GM13976 (cell line): ENCODE measurements at regions of chr11 and their contacts with region 1.

Region 1: DNA sequence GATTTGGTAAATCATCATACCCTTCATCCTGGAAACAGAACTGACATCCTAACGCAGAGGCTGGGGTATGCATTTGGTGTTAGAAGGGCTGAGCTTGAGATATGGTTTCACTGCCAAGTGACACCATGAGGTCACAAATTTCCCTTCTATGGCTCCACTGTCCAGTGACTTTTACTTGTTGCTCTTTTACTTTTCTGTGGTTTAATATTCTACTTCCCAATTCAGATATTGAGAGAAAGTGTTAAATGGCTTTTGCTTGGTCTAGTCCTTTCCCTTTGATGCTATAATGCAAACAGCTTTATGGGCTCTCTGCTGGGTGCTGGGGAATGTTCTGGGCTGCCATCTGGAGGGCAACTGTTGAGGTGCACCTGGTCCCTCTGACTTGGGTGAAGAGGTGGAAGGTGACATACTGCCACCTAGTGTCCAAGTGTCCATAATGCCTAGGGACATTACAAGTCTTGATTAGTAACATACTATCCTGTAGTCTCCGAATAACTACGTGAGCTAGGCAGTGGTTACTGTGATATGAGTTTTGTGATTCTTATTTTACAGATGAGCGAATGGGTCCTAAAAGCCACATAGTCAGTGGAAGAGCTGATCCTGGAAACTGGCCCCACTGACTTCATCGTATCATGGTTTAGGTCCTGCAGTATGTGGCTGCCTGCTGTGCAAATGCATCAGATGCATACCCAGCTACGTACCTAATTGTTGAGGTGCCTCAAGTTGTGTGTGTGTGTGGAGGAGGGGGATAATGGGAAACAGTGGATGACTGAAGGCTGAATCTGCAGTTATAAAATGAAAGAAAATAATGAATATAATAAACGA is 149.1 kb upstream of the RAG2 start:
- DNase-seq: peak; percentile 66
- CTCF ChIP-seq: peak; percentile 98

Region 2: DNA sequence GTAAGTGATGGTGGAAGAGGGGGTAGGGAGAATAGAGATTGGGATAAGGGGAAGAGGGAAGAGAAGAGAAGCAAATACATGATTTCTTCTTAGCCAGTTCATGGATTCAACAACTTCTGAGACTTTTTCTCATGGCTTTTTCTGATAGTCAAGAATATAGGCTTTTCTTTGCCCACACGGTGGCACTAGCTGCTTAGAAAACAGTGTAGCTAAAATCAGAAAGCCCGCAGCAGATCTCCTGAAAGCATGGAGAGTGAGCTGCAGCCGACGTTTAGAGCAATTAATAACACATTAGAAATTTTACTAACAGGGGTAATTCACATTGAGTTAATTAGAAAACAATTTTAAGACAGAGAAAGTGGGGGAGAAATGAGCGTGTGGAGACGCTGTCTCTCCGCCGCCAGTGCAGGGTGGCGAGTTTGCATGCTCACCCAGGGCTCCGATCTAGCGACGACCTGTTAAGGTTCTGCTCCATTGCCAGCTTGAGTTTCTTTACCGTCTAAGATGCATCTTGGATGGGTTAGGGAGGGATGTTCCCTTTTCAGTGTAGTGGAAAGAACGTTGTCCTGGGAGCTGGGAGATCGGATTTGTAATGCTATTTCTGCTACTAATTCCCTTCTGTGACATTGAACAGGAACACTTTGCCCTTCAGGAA is 182.6 kb before region 1 on chr11:
- in situ Hi-C with region 1: loop called (anchors 25 kb)
- DNase-seq: peak; percentile 45
- CTCF ChIP-seq: peak; percentile 44

Region 3: DNA sequence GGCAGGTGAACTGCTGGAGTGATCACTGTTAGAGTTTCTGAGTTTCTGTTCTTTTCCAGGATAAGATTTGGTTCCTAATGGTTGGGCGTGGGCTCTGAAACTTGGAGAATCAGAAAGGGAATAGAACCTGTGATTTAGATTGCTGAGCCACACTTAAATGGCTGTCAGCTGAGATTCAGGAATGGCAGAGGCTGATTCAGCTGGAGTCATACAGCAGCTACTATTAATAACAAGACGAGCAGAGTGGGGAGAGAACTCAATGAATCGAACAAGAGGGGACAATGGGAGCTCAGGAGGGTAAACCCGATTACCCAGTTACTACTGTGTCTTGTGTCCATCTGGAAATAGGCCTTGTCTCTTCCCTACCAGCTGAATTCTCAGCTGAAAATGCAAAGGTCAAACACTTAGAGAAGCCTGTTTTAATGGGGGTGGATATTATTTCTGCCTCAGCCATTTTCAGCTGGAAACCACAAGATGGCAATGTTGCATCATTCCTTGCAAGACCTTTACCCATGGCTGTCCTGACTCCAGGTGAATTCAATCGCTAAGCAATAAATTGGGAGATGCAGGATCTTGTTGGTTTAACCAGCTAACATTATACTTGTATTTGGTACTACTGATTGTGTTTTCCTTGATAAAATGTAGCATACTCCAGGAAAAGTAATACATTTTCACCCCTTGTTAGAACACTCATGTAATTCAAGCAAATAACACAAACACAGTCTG is 44.6 kb before region 1 on chr11:
- in situ Hi-C with region 1: loop called (anchors 5 kb)
- DNase-seq: peak; percentile 62
- CTCF ChIP-seq: peak; percentile 67

Region 4: DNA sequence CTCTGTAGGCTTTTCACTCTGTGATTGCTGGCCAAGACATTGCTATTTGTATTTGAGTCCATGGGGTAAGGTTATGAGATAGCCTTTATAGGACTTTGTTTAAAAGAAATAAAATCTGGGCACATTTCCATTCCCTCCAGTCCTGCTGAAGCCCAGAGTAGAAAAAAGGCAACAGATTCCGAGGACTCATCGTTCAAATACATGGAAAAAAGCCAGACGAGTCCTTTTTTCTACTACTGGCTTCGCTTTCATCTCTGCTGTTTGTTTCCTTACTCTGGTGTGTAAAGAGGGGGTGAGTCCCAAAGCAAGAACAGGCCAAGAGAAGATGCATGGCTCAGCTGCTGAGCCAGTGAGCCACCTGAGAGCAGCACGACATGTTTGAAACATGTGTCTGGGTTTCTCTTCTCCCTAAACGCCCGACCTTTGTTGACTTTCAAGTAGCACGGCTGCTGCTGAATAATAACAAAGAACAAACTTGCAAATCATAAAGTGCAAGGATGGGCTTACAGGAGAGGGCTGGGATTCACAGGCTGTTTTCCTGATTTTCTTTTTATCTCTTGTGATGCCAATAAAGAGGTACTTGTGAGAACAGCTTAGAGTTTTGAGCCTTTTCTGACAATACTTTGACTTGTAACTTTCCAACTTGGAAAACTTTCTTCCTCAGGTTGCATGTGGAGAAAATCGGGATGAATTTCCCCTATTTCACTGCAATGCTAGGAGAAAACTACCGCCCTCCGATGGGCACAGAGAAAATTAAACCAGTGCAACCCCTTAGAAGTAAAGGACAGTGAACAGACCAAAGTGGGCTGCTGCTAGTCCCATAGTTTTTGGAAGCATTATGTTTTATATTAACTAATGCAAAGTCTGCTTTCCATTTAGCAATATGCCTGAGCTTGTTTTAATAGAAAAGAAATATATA is 46.2 kb after region 1 on chr11:
- in situ Hi-C with region 1: no loop called
- DNase-seq: no peak
- CTCF ChIP-seq: no peak

Region 5: DNA sequence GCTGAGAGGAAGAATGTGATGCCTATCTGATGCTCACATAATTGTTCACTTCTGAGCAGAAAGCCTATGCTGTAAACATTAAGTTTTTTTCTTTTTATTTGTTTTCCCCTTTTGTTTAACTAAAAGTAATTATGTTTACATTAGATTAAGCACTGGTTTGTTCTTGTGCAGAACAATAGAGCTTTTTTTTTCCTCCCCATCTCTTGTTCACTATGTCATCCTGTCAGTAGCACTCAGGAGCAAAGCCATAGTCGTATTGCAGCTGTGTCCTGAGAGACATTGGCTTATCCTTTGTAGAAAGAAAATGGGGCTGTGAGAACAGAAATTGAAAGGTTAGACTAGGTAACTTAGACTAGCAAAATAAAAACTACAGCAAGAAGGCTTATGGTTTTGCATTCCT is 152.7 kb after region 1 on chr11:
- in situ Hi-C with region 1: no loop called
- DNase-seq: no peak
- CTCF ChIP-seq: no peak